GM18951 (cell line): ENCODE measurements at regions of chr10 and their contacts with region 1.

Region 1: GRCh38 chr10:71899665-71900412 is 48.8 kb upstream of the PSAP start:
- POLR2A ChIP-seq: no peak

Region 2: DNA sequence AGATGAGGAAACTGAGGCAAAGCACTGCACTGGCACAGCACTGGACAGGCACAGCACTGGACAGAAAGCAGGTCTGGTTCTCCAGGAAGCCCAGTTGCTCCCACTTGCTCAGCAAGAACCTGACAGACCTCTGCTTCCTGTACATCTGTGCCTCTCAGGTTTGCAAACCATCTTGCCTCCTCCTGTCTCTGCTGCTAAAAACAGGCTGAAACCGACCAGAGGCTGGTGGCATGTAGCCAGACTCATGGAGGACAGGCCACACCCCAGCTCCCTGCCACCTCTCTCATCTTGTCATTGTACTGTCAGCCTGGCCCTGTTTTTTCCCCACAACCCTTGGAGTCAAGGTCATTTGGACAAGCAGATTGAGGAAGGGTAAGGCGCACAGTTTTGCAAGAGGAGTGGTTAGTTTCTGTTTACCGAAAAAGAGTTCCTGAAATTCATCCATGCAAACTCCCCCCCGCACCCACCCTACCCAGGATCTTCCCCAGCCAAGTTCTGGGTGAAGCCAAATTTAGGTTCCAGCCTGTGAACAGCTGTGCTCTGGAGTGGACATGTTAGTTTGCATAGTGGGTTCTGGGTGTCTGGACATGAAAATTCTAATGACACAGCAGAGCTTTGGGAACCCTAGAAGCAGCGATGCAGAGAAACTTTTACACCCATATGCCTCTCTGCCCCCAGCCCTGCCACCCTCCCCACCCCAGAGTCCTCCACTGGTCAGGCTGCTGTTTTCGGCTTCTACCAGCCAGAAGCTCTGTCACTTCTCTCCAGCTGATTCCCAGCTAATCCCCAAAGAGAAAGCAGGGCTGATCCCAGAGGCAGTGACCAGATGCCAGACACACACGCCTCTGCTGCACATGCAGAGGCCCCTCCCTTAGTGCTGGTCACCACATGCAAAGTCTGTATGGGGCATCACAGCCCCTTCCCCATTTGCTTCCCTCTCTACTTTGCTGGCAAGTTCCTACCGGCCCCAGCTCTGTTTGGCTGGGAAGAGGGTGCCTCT is 171.8 kb before region 1 on chr10:
- in situ Hi-C with region 1: no loop called
- POLR2A ChIP-seq: peak; percentile 56

Region 3: DNA sequence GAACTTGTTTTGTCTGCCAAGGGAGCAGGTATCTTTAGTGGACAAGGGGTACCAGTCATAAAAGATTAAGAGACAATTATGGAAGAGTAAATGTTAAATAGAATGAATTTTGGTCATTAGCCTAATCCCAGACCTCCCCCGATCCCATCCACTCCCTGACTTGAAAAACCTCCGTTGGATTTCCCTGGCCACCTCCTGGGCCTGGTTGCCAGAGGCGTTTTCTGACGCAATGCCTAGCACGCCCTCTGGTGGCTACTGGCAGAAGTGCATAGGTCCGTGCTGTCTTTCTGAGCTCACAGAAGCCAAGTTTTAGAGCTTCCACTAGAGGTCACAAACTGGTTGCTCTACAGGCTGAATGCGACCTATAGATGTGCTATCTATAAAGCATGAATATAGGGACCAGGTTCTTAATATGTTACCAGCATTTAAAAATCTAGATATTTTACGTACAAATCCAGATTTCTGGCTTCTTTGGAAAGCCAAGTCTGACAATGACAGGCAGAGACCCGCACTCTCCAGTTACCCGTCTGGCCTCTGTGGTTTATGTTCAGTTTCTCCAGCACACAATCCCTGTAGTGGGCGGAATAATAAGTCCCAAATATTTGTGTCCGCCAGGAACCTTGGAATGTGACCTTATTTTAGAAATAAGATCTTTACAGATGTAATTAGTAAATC is 148.7 kb after region 1 on chr10:
- in situ Hi-C with region 1: loop called (anchors 5 kb)
- POLR2A ChIP-seq: no peak